T-cell (primary cell): ENCODE measurements at regions of chr9 and their contacts with region 1.

Region 1: GRCh38 chr9:99819856-99820684 is 1.6 kb upstream of the NR4A3 start:
- DNase-seq: peak in 34 of 35 experiments; percentile 82 to 98 (median 96)
- ATAC-seq: peak; percentile 60 to 75 (median 66)
- H3K4me3 ChIP-seq: peak overlapping the region; percentile 75 to 86
- H3K4me3 Mint-ChIP-seq: peak overlapping the region; percentile 92 to 95 (median 94)
- H3K27ac ChIP-seq: peak overlapping the region; percentile 96
- H3K27ac Mint-ChIP-seq: peak overlapping the region; percentile 86 to 91
- H3K4me1 ChIP-seq: peaks cover 36 to 56% of the 10 kb centered on the region in 2 experiments
- H3K4me1 Mint-ChIP-seq: peaks cover 46 to 59% (median 54%) of the 10 kb centered on the region in 3 donors
- H3K27me3 ChIP-seq: peaks cover 2 to 36% of the 10 kb centered on the region in 2 experiments
- H3K27me3 Mint-ChIP-seq: peaks cover 27% of the 10 kb centered on the region in 2 donors

Region 2: DNA sequence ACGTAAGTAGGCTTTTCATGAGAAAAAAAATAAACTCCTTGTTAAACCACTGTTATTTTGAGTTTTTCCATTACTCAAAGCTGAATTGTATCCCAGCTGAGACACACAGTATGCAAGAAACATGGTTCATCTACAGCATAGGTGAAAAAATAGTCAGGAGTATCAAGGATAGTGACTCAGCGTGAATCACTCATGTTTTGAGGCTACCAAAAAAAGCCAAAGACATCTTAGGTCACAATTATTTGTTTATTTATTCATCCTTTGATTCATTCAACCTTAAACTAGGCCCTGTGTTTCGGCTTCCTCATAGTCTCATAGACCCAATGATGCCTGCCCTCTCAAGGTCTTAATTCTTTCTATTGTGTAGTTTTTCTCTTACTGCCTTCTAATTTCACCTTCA is 53.5 kb after region 1 on chr9:
- CTCF ChIA-PET with region 1: interaction called in 1 of 2 experiments, 20 read pairs
- POLR2A ChIA-PET with region 1: no interaction called
- DNase-seq: no peak
- ATAC-seq: no peak
- H3K4me3 ChIP-seq: no peak overlapping the region
- H3K4me3 Mint-ChIP-seq: no peak overlapping the region
- H3K27ac ChIP-seq: no peak overlapping the region
- H3K27ac Mint-ChIP-seq: no peak overlapping the region
- H3K4me1 ChIP-seq: no peaks in the 10 kb centered on the region
- H3K4me1 Mint-ChIP-seq: peaks cover 0 to 3% (median 0%) of the 10 kb centered on the region in 3 donors
- H3K27me3 ChIP-seq: no peaks in the 10 kb centered on the region
- H3K27me3 Mint-ChIP-seq: peaks cover 0 to 9% of the 10 kb centered on the region in 2 donors

Region 3: GRCh38 chr9:99906403-99907207 is 86.5 kb after region 1 on chr9 and contains the start of gene STX17:
- CTCF ChIA-PET with region 1: interaction called, 3 to 11 read pairs
- POLR2A ChIA-PET with region 1: interaction called, 6 to 15 read pairs
- DNase-seq: peak; percentile 66 to 87 (median 75)
- ATAC-seq: peak; percentile 87 to 88 (median 88)
- H3K4me3 ChIP-seq: peak within 1 kb of the TSS; percentile 72 to 90
- H3K4me3 Mint-ChIP-seq: peak within 1 kb of the TSS; percentile 96 to 98 (median 98)
- H3K27ac ChIP-seq: peak within 1 kb of the TSS; percentile 95
- H3K27ac Mint-ChIP-seq: peak within 1 kb of the TSS; percentile 98 to 99
- H3K4me1 ChIP-seq: peaks cover 7 to 11% of the 10 kb centered on the region in 2 experiments
- H3K4me1 Mint-ChIP-seq: peaks cover 33 to 40% (median 36%) of the 10 kb centered on the region in 3 donors
- H3K27me3 ChIP-seq: no peaks in the 10 kb centered on the region
- H3K27me3 Mint-ChIP-seq: no peaks in the 10 kb centered on the region
- total RNA-seq, gene STX17: 33.5 to 47.5 (median 35.9) TPM